Activated CD4-positive, alpha-beta T cell treated with anti-CD3 and anti-CD28 coated beads, Interleukin-2, amount 10 ng/mL, durations not matched to agents 24 days and 14 days (primary cell): ENCODE measurements at regions of chr16 and their contacts with region 1.

Region 1: DNA sequence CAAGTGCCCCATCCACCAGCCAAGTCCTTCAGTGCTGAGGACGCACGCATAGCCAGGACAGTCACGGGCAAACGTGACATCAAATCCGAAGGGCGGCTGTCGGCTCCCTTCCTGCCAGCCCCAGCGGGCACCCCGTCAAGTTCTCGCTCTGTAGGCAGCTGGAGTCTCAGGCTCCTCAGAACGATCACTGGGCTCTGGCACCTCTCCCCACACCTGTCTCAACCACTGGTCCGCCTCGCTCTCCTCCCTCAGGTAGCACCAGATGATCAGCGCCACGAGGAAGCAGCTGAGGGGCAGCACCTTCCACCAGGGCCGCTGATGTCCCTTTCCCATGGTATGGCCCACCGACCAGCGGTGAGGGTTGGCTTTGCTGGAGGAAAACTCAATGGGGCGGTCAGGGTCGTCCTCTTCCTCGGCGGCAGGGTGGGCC is 421 bp downstream of the UQCC4 start:
- DNase-seq: no peak
- H3K4me3 Mint-ChIP-seq: peak overlapping the region; percentile 81
- H3K27ac Mint-ChIP-seq: peak overlapping the region; percentile 97
- H3K4me1 Mint-ChIP-seq: peaks cover 18% of the 10 kb centered on the region
- H3K27me3 Mint-ChIP-seq: peaks cover 3% of the 10 kb centered on the region

Region 2: DNA sequence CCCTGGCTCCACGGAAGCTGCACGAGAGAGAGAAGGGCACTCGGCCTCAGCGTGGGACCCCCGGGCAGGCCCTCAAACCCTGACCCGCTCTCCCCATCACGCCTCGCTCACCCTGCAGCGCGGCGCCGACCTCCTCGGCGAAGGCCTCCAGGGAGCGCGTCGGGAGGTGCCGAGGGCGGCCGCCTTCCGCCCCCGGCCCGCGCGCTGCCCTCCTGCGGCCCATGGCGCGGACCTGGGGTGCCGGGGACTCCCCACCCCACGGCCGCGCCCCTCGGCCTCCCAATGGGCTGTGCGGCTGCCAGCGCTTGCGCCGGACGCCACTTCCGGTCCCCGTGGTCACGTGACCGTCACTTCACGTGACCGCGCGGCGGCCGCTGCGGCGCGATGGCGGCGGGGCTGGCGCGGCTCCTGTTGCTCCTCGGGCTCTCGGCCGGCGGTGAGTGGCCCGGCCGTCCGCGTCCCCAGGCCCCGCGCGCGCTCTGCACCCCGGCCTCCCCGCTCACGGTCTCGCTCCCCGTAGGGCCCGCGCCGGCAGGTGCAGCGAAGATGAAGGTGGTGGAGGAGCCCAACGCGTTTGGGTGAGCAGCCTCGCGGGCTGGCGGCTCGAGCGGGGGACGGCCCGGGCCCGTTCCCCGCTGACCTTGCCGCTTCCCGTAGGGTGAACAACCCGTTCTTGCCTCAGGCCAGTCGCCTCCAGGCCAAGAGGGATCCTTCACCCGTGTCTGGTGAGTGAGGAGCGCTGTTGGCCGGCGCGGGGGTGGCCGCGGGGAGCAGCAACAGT is 68.4 kb before region 1 on chr16 and contains the starts of genes GNPTG and TSR3:
- intact Hi-C with region 1: loop called (anchors 5 kb)
- DNase-seq: peak; percentile 98
- H3K4me3 Mint-ChIP-seq: peak within 1 kb of the TSS; percentile 92
- H3K27ac Mint-ChIP-seq: peak within 1 kb of the TSS; percentile 78
- H3K4me1 Mint-ChIP-seq: peaks cover 27% of the 10 kb centered on the region
- H3K27me3 Mint-ChIP-seq: no peaks in the 10 kb centered on the region
- total RNA-seq, gene GNPTG: 23.3 and 23.9 TPM in 2 replicates
- total RNA-seq, gene TSR3: 81.5 and 88.2 TPM in 2 replicates

Region 3: GRCh38 chr16:1450218-1450617 is 30.1 kb after region 1 on chr16:
- intact Hi-C with region 1: no loop called
- DNase-seq: no peak
- H3K4me3 Mint-ChIP-seq: no peak overlapping the region
- H3K27ac Mint-ChIP-seq: no peak overlapping the region
- H3K4me1 Mint-ChIP-seq: no peaks in the 10 kb centered on the region
- H3K27me3 Mint-ChIP-seq: no peaks in the 10 kb centered on the region

Region 4: GRCh38 chr16:1474796-1475551 is 54.8 kb after region 1 on chr16 and contains the start of gene CLCN7:
- intact Hi-C with region 1: loop called (anchors 2 kb)
- DNase-seq: peak; percentile 97
- H3K4me3 Mint-ChIP-seq: peak within 1 kb of the TSS; percentile 89
- H3K27ac Mint-ChIP-seq: peak within 1 kb of the TSS; percentile 87
- H3K4me1 Mint-ChIP-seq: peaks cover 9% of the 10 kb centered on the region
- H3K27me3 Mint-ChIP-seq: no peaks in the 10 kb centered on the region
- total RNA-seq, gene CLCN7: 56.5 and 58.0 TPM in 2 replicates